Activated CD4-positive, alpha-beta memory T cell treated with anti-CD3 and anti-CD28 coated beads, Interleukin-2, amount 10 ng/mL, durations not matched to agents 7 days and 5 days (primary cell): ENCODE measurements at regions of chr1 and their contacts with region 1.

Region 1: DNA sequence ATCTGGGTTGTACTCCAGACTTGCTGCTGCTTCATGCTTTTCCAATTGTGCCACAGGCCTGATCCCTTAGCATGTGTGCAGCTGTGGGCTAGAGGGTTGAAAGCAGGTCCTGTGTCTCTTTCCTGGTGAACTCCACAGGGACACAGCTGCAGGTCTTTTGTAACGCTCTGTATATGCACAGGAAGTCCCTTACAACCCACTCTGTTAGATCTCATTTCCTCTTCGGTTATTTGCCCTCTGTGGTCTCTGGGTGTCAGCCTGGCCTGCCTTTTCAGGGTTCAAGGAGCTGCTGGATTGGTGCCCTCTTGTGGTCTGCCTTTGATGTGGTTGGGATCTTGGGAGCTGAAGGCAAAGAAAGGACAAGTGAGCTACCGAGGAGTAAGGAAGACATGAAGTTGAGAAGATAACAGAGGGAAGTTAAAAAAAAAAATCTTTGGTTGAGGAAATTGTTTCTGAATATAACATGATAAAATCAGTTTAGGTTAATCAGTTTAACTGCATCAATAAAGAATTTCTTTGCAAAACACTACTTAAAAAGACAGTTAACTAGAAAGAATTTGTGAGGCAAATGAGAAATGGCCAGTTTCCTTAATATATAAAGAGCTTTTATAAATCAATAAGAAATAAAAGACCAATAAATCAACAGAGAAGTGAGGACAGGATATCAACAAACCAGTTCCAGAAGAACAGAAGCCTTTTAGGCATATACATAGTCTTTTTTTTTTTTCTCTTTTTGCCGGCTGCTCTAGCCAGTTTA is 44.1 kb downstream of the UCK2 start:
- DNase-seq: peak; percentile 78
- H3K4me3 Mint-ChIP-seq: no peak overlapping the region
- H3K27ac Mint-ChIP-seq: peak overlapping the region; percentile 65
- H3K4me1 Mint-ChIP-seq: peaks cover 40% of the 10 kb centered on the region
- H3K27me3 Mint-ChIP-seq: no peaks in the 10 kb centered on the region

Region 2: DNA sequence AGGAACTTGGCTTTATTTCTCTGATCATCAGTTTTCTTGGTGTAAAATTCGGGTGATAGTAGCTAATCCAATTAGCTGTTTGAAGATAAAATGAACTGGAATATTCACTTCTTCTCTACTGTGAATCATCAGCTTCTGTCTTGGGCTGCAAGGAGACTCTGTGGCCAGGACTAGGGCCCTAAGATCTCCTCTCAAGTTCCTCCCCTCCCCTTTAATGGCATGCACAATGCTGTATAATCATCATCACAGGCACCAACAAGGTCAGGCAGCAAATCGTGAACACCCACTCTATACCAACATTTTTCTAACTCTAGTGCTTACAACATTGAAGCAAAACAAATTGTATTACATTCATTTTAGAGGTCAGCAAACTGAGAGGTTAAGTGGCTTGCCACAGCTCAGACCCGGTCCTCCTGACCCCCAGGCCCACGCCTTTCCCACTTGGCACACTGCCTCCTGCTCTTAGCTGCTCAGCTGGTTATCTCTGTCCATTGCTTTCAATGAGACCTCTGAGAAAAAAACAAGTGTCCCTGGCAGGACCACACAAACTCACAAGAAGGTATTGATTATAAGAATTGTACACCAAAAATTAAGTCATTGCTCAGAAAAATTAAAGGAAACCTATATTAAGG is 295.9 kb before region 1 on chr1:
- CTCF ChIA-PET with region 1: no interaction called
- POLR2A ChIA-PET with region 1: no interaction called
- DNase-seq: no peak
- H3K4me3 Mint-ChIP-seq: no peak overlapping the region
- H3K27ac Mint-ChIP-seq: no peak overlapping the region
- H3K4me1 Mint-ChIP-seq: no peaks in the 10 kb centered on the region
- H3K27me3 Mint-ChIP-seq: peaks cover 44% of the 10 kb centered on the region

Region 3: GRCh38 chr1:165827268-165828102 is 44.0 kb before region 1 on chr1 and contains the start of gene UCK2:
- CTCF ChIA-PET with region 1: interaction called, 10 read pairs
- POLR2A ChIA-PET with region 1: interaction called, 16 read pairs
- DNase-seq: peak; percentile 63
- H3K4me3 Mint-ChIP-seq: peak within 1 kb of the TSS; percentile 90
- H3K27ac Mint-ChIP-seq: peak within 1 kb of the TSS; percentile 83
- H3K4me1 Mint-ChIP-seq: peaks cover 26% of the 10 kb centered on the region
- H3K27me3 Mint-ChIP-seq: no peaks in the 10 kb centered on the region
- total RNA-seq, gene UCK2: 32.1 to 34.4 TPM

Region 4: DNA sequence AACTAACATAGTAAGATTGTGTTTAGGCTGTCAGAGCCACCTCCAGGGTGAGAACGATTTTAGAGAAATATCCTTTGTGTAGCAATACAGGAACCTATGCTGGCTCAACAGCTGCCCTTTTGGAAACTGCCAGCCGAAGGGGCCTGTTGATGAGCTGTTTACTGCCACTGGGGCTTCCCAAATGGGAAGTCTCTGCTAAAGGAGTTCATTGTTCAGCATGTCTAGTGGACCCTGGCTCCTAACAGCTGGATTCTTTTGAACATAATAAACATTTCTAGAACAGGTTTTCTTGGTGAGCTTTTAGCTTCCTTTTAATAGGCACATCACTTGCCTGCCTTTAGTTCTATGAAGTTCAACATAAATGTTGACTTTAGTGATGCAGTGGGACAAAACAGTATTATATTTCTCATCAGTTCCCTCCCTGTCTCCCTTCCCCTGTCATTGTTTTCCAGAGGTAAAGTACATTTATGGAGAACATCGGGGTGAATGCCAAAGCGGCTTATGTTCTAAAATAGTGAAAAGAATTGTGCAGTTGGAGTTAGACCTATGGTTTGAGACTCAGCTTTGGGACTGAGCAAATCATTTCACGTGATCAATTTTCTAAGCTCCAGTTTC is 13.3 kb after region 1 on chr1:
- CTCF ChIA-PET with region 1: interaction called, 19 read pairs
- POLR2A ChIA-PET with region 1: interaction called, 4 read pairs
- DNase-seq: no peak
- H3K4me3 Mint-ChIP-seq: no peak overlapping the region
- H3K27ac Mint-ChIP-seq: no peak overlapping the region
- H3K4me1 Mint-ChIP-seq: peaks cover 22% of the 10 kb centered on the region
- H3K27me3 Mint-ChIP-seq: no peaks in the 10 kb centered on the region